A673 (cell line): ENCODE measurements at regions of chr1 and their contacts with region 1.

Region 1: GRCh38 chr1:222914861-222915632 is 100.2 kb downstream of the DISP1 start:
- DNase-seq: no peak
- H3K4me3 ChIP-seq: no peak overlapping the region
- H3K27ac ChIP-seq: no peak overlapping the region
- H3K4me1 ChIP-seq: no peaks in the 10 kb centered on the region
- H3K27me3 ChIP-seq: no peaks in the 10 kb centered on the region
- CTCF ChIP-seq: no peak

Region 2: DNA sequence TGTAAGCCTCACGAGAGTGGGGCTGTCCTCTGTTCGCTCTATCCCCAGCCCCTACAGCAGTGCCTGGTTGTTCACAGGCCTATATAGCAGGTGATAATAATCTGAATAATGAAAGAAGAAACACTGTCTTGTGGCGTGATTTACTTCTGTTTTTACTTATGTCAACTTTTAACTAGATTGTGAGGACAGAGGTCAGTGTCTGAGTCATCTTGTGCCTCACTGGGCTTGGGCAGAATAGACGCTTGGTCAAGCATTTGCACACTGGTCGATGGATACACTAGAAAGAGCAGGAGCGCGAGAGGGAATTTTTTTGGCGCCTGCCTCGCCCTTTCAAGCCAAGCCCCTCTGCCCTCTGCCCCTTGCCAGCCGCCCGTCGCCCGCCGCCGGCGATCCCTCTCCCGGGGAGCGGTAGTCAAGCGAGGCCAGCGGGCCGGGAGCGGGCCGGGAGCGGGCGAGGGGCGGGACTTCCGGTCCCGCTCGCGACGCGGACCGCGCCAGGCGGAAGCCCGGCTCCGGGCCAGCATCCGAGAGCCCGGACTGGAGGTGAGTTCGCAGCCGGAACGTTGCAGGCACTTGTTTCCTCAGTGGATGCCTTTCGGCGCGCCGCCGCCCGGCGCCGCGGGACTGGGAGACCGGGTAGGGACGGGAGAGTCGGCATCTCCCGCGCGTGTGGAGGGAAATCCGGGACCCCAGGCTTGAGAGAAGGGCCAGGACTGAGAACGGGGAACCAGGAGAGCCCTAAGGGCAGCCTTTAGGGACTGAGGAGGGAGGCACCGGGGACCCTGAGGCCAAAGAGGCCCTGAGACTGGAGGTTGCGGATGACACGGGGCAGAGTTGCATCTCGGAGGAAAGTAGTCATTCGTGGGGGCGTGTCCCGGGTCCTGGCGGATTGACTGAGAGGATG is 100.3 kb before region 1 on chr1 and contains the start of gene DISP1:
- CTCF ChIA-PET with region 1: no interaction called
- POLR2A ChIA-PET with region 1: no interaction called
- intact Hi-C with region 1: no loop called
- DNase-seq: peak; percentile 83
- H3K4me3 ChIP-seq: peak within 1 kb of the TSS; percentile 93
- H3K27ac ChIP-seq: peak within 1 kb of the TSS; percentile 26
- H3K4me1 ChIP-seq: peaks cover under 1% of the 10 kb centered on the region
- H3K27me3 ChIP-seq: no peaks in the 10 kb centered on the region
- CTCF ChIP-seq: no peak
- total RNA-seq, gene DISP1: 1.4 TPM in 2 replicates

Region 3: DNA sequence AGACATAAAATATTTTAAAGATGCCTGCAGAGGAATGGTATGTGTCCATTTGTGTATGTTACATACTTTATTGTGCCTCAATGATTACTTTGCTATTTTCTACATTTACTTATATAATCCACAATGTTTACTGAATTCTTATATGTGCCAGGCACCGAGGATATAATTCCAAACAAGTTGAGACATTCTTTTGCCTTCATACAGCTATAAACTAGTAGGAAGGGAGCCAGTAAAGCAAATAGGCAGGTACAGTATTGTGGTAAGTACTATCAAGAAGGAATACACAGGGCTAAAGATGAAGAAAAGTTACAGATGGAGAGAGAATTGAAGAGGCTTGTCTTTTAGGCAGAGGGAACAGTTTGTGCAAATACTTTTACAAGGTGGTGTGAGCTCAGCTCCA is 31.4 kb after region 1 on chr1:
- CTCF ChIA-PET with region 1: no interaction called
- POLR2A ChIA-PET with region 1: interaction called, 16 read pairs
- intact Hi-C with region 1: no loop called
- DNase-seq: no peak
- H3K4me3 ChIP-seq: no peak overlapping the region
- H3K27ac ChIP-seq: no peak overlapping the region
- H3K4me1 ChIP-seq: no peaks in the 10 kb centered on the region
- H3K27me3 ChIP-seq: no peaks in the 10 kb centered on the region
- CTCF ChIP-seq: no peak